ENCODE measurements at regions of chr5 and their contacts with region 1.

Region 1: GRCh38 chr5:114101153-114101552 is 260.7 kb upstream of the KCNN2 start:
- DNase-seq: no peak
- H3K4me3 ChIP-seq: no peak overlapping the region
- CTCF ChIP-seq: peak; percentile 65

Region 2: GRCh38 chr5:114113604-114114003 is 12.5 kb after region 1 on chr5:
- CTCF ChIA-PET with region 1: interaction called, 18 read pairs
- POLR2A ChIA-PET with region 1: no interaction called
- DNase-seq: no peak
- H3K4me3 ChIP-seq: no peak overlapping the region
- CTCF ChIP-seq: no peak

Region 3: DNA sequence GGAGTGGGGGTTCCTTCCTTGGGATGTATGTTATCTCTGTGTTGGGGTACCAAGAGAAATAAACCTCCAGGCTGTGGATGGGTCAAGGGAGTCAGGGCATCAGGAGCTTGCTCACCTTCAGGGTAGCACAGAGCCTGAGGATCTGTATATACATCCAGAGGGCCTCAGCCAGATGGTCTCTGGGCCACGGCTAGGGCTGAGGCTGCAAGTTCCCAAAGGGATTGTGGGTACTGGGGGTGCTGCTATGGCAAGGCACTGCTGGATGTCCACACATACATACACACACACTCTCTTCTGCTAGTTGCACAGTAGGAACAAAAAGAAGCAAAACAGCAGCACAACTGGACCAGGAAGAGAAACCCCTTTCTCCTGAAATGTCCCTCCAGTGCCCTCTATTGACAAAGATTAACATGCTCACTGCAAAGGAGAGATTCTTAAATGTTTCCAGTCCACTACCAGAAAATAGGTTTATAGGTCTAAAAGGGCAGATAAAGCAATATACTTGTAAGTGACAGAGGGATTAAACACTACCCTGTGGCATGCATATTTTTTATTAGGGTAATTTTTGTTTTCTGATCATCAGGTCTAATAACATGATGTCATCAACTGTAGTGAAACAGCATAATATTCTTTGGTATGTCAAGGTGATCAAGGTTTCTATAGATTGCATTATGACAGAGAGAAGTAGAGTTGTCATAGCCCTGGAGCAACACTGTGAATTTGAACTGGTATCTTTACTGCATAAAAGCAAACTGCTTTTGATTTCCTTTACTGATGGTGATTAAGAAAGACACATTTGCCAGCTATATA is 204.5 kb after region 1 on chr5:
- CTCF ChIA-PET with region 1: interaction called, 66 read pairs
- POLR2A ChIA-PET with region 1: no interaction called
- DNase-seq: no peak
- H3K4me3 ChIP-seq: no peak overlapping the region
- CTCF ChIP-seq: peak; percentile 67

Region 4: DNA sequence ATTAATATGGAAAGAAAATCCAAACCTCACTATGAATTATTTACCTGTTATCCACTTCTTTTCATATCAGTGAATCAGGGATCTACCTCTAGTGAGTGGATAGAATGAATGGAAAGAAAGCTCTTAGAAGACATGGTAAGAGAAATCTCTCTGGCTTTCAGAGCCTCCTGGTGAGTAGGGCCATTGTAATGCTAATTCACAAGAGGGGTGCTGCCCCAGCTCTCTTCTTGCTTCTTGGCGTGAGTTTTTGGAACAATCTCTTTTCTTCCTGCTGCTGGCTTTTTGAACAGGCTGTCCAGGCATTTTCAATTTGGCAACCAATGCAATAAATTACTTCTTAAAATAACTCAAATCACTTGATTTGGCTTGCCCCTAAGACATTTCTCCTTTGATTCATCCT is 210.8 kb after region 1 on chr5:
- CTCF ChIA-PET with region 1: interaction called, 66 read pairs
- POLR2A ChIA-PET with region 1: no interaction called
- DNase-seq: no peak
- H3K4me3 ChIP-seq: no peak overlapping the region
- CTCF ChIP-seq: no peak

Region 5: GRCh38 chr5:114355086-114355830 is 254.1 kb after region 1 on chr5:
- CTCF ChIA-PET with region 1: interaction called, 31 read pairs
- POLR2A ChIA-PET with region 1: no interaction called
- DNase-seq: no peak
- H3K4me3 ChIP-seq: no peak overlapping the region
- CTCF ChIP-seq: no peak

Region 6: DNA sequence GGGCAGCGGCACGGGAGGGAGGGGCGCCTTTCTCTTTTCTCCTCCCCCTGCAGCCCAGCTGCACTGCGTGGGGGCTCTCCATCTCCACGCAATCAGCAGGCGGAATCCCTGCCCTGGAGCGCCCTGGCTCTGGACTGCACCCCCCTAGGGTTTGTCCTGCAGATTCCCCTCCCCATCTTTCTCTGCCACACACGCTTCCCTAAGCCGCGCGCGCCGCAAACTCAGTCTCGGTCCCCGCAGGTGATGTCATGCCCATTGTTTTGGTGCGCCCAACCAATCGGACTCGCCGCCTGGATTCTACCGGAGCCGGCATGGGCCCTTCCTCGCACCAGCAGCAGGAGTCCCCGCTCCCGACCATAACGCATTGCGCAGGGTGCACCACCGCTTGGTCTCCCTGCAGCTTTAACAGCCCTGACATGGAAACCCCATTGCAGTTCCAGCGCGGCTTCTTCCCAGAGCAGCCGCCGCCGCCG is 260.6 kb after region 1 on chr5 and contains the start of gene KCNN2:
- CTCF ChIA-PET with region 1: interaction called, 31 read pairs
- POLR2A ChIA-PET with region 1: no interaction called
- DNase-seq: no peak
- H3K4me3 ChIP-seq: peak within 1 kb of the TSS; percentile 65
- CTCF ChIP-seq: no peak

Measured in AG04449 (cell line).